ENCODE measurements at regions of chr1 and their contacts with region 1.

Region 1: DNA sequence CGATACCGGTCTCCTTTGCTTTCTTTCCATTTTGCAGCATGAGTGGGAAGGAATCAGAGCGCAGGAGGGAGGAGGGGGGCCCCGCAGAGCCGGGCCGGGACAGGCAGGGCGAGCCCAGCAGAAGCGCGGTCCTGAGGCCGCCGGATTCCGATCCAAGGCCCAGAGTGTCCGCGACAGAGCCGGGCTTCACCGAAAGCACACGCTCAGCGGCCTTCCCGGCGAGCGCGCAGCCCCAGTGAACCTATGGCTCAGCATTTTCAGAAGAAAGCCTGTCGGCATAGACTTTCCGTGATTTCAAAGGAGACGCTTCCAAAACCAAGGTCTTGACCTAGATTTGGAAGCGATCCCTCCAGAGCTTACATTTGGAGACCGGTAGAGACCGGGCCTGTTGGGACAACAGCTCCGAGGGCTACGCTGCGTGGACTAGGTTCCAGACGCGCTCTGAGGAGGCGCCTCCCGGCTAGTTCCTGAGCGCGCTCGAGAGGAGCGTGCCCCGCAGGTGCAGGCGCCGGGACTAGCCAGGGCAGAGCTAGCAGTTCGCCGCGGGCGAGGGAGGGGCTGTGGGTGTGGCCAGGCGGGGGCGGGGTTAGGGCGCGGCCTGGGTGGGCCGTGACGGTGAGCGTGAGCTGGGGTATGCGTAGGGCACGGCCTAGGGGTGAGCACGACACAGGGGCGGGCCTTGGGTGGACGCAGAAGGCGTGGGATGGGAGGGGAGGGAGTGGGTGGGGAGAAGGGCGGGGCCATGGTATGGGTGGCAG is 27.8 kb upstream of the PRSS38 start:
- DNase-seq: peak; percentile 85 to 94 (median 91)
- H3K4me3 ChIP-seq: peak overlapping the region; percentile 58 to 84 (median 72)
- H3K4me3 Mint-ChIP-seq: peak overlapping the region; percentile 88 to 92
- H3K27ac ChIP-seq: no peak overlapping the region
- H3K27ac Mint-ChIP-seq: peak overlapping the region in 5 of 7 donors; percentile 10 to 85 (median 51)
- H3K4me1 ChIP-seq: peaks cover 19 to 23% of the 10 kb centered on the region in 2 donors
- H3K4me1 Mint-ChIP-seq: peaks cover 16% of the 10 kb centered on the region
- H3K27me3 ChIP-seq: peaks cover 6 to 41% of the 10 kb centered on the region in 2 donors
- H3K27me3 Mint-ChIP-seq: peaks cover 36 to 47% (median 45%) of the 10 kb centered on the region in 3 donors
- CTCF ChIP-seq: no peak

Region 2: DNA sequence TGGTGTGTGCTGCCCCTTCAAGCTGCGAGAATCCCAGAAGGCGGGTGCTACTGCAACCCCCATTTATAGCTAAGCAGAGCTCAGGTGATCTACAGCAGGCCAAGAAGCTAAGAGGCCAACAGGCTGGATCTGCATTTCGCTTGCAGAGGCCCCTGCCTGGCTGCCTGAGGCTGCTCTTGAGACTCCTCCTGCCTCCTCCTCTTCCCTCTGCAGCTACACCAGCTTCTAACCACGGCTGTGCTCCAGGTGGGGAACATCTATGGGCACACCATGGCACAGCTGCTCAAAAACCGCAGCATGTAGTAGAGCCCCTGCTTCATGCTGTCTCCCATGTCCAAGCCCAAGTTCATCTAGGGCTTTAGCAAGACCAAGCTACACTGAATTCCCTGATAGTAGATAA is 297.2 kb before region 1 on chr1:
- intact Hi-C with region 1: no loop called
- DNase-seq: no peak
- H3K4me3 ChIP-seq: no peak overlapping the region
- H3K4me3 Mint-ChIP-seq: no peak overlapping the region
- H3K27ac ChIP-seq: no peak overlapping the region
- H3K27ac Mint-ChIP-seq: no peak overlapping the region
- H3K4me1 ChIP-seq: no peaks in the 10 kb centered on the region
- H3K4me1 Mint-ChIP-seq: peaks cover 4% of the 10 kb centered on the region
- H3K27me3 ChIP-seq: no peaks in the 10 kb centered on the region
- H3K27me3 Mint-ChIP-seq: peaks cover 0 to 2% (median 0%) of the 10 kb centered on the region in 3 donors
- CTCF ChIP-seq: no peak

Region 3: GRCh38 chr1:228174482-228175375 is 387.0 kb after region 1 on chr1:
- intact Hi-C with region 1: loop called in 1 of 2 experiments (anchors 5 kb)
- DNase-seq: no peak
- H3K4me3 ChIP-seq: no peak overlapping the region
- H3K4me3 Mint-ChIP-seq: no peak overlapping the region
- H3K27ac ChIP-seq: no peak overlapping the region
- H3K27ac Mint-ChIP-seq: peak overlapping the region in 4 of 7 donors; percentile 6 to 59 (median 58)
- H3K4me1 ChIP-seq: peaks cover 18 to 19% of the 10 kb centered on the region in 2 donors
- H3K4me1 Mint-ChIP-seq: peaks cover 20% of the 10 kb centered on the region
- H3K27me3 ChIP-seq: no peaks in the 10 kb centered on the region
- H3K27me3 Mint-ChIP-seq: peaks cover 0 to 4% (median 0%) of the 10 kb centered on the region in 3 donors
- CTCF ChIP-seq: no peak

Measured in CD14-positive monocyte (primary cell).